HEK293T (cell line): ENCODE measurements at regions of chr1 and their contacts with region 1.

Region 1: GRCh38 chr1:44571712-44572571 is 102.3 kb downstream of the TMEM53 start:
- DNase-seq: peak; percentile 55

Region 2: GRCh38 chr1:44557778-44558177 is 14.2 kb before region 1 on chr1:
- CTCF ChIA-PET with region 1: interaction called, 14 read pairs
- POLR2A ChIA-PET with region 1: no interaction called
- DNase-seq: no peak

Region 3: DNA sequence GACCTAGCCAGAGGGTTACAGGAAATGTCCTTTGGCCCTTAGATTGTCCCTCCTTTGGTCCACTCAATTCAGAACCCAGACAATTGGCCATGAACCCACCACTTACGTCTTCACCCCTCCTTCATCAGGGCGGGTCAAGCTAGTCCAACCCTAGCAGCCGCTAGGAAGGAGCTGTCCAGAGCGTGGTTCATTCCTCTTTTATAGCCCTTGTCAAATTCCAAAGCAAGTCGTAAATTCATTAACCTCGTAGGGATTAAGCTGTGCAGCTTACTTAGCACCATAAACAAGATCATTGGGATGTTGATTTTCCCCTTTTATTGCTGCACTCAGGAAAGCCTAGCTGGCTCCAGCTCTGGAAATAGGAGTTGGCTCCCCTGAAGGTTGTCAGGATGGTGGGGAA is 12.2 kb after region 1 on chr1:
- CTCF ChIA-PET with region 1: interaction called, 23 read pairs
- POLR2A ChIA-PET with region 1: no interaction called
- DNase-seq: peak; percentile 24

Region 4: GRCh38 chr1:44594871-44595746 is 23.2 kb after region 1 on chr1:
- CTCF ChIA-PET with region 1: interaction called, 16 read pairs
- POLR2A ChIA-PET with region 1: no interaction called
- DNase-seq: peak; percentile 91

Region 5: GRCh38 chr1:44757420-44757819 is 185.5 kb after region 1 on chr1:
- CTCF ChIA-PET with region 1: no interaction called
- POLR2A ChIA-PET with region 1: no interaction called
- DNase-seq: no peak